ENCODE measurements at regions of chr3 and their contacts with region 1.

Region 1: GRCh38 chr3:14203521-14204079 is 25.0 kb downstream of the LSM3 start:
- DNase-seq: peak; percentile 77
- ATAC-seq: peak; percentile 77
- H3K4me3 ChIP-seq: no peak overlapping the region
- H3K27ac ChIP-seq: no peak overlapping the region
- H3K4me1 ChIP-seq: no peaks in the 10 kb centered on the region
- H3K27me3 ChIP-seq: no peaks in the 10 kb centered on the region
- CTCF ChIP-seq: peak; percentile 93

Region 2: DNA sequence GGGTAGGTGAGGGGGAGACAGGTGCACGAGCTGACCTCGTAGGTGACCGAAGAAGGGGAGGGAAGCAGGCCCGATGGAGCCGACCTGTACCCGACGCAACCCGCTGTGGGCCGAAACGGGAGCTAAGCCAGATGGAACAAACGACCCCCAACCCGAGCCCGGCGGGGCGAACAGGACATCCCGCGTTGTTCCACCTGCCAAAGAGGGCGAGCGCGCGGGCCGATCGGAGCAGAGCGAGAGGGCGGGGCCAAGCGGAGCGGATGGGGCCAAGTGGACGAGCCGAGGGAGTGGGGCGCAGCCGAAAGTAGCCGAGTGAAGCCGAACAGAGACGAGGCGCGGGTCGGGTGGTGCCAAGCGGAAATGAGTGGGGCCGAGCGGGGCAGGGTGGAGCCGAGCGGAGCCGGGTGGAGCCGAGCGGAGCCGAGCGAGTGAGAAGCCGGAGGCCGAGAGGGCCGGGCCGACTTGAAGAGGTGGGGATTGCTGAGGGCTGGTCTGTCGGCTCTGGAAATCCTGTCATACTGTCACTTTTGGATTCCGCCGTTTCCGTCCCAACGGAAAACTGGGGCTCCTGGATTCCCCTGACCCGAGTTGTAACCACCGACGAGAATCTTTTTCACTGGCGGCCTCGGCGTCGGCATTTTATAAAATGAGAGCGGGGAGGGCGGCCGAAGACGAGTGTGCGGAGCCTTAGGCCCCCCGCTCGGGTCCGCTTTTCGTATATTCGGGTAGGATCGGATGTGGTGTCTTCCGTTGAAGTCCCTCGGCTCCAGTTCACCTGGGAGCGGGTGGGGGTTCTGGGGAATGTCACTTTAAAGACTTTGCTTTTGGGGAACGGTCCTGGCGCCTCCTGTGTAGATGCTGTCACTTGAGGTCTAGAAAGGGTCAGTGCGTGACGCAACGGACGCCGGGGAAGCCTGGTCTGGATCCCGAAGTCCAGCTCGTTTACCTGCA is 308.2 kb before region 1 on chr3:
- CTCF ChIA-PET with region 1: interaction called, 13 read pairs
- POLR2A ChIA-PET with region 1: no interaction called
- intact Hi-C with region 1: loop called (anchors 2 kb)
- DNase-seq: peak; percentile 95
- ATAC-seq: peak; percentile 98
- H3K4me3 ChIP-seq: peak overlapping the region; percentile 79
- H3K27ac ChIP-seq: no peak overlapping the region
- H3K4me1 ChIP-seq: peaks cover 23% of the 10 kb centered on the region
- H3K27me3 ChIP-seq: no peaks in the 10 kb centered on the region
- CTCF ChIP-seq: no peak

Region 3: DNA sequence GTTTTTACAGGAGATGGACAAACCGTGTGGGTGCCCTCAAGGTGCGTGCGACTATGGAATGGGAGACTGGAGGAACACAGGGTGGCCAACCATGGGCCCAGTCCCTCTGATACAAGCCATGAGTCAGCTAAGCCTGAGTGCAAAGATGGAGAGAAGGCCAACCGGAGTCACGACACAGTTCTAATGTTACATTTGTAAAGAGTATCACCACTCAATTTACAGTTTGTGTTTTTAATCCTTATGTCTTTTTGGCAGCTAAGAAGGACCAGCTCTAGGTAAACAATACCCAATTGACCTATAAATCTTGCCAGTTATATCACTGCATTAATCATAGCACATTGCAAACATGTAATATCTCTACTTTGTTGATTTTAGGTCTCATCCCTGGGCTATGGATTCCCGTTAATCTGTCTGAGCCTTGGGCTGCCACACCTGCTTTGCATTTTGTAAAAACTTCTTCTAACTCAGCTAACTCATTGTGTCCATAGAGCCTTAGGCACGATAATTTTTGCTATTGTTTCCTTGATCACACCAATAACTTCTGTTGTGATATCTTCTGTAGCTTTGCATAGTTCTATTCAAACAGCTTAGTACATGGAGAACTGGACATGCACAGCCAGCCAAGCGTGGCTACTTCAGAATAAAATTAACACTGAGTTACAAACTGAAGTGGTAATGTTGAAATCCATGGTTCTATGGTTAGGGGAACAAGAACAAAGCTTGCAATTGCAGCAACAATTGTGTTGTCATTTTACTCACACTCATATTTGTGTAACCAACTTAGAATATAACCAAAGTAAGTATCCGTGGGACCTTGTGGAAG is 25.3 kb after region 1 on chr3:
- CTCF ChIA-PET with region 1: interaction called, 14 read pairs
- POLR2A ChIA-PET with region 1: no interaction called
- intact Hi-C with region 1: loop called (anchors 2 kb)
- DNase-seq: peak; percentile 88
- ATAC-seq: peak; percentile 71
- H3K4me3 ChIP-seq: peak overlapping the region; percentile 47
- H3K27ac ChIP-seq: peak overlapping the region; percentile 99
- H3K4me1 ChIP-seq: peaks cover 77% of the 10 kb centered on the region
- H3K27me3 ChIP-seq: no peaks in the 10 kb centered on the region
- CTCF ChIP-seq: no peak

Region 4: GRCh38 chr3:14297784-14298236 is 94.2 kb after region 1 on chr3:
- CTCF ChIA-PET with region 1: no interaction called
- POLR2A ChIA-PET with region 1: no interaction called
- intact Hi-C with region 1: no loop called
- DNase-seq: no peak
- ATAC-seq: no peak
- H3K4me3 ChIP-seq: no peak overlapping the region
- H3K27ac ChIP-seq: no peak overlapping the region
- H3K4me1 ChIP-seq: 0 out of 2 replicates have a peak, but pooled peaks cover 7% of the 10 kb centered on the region
- H3K27me3 ChIP-seq: peaks cover 19% of the 10 kb centered on the region
- CTCF ChIP-seq: no peak

Region 5: GRCh38 chr3:14371573-14372474 is 168.2 kb after region 1 on chr3:
- CTCF ChIA-PET with region 1: interaction called, 11 read pairs
- POLR2A ChIA-PET with region 1: no interaction called
- intact Hi-C with region 1: loop called (anchors 10 kb)
- DNase-seq: peak; percentile 95
- ATAC-seq: peak; percentile 83
- H3K4me3 ChIP-seq: no peak overlapping the region
- H3K27ac ChIP-seq: peak overlapping the region; percentile 40
- H3K4me1 ChIP-seq: peaks cover 34% of the 10 kb centered on the region
- H3K27me3 ChIP-seq: no peaks in the 10 kb centered on the region
- CTCF ChIP-seq: peak; percentile 38; the same call in 1 of the 2 replicates

Region 6: DNA sequence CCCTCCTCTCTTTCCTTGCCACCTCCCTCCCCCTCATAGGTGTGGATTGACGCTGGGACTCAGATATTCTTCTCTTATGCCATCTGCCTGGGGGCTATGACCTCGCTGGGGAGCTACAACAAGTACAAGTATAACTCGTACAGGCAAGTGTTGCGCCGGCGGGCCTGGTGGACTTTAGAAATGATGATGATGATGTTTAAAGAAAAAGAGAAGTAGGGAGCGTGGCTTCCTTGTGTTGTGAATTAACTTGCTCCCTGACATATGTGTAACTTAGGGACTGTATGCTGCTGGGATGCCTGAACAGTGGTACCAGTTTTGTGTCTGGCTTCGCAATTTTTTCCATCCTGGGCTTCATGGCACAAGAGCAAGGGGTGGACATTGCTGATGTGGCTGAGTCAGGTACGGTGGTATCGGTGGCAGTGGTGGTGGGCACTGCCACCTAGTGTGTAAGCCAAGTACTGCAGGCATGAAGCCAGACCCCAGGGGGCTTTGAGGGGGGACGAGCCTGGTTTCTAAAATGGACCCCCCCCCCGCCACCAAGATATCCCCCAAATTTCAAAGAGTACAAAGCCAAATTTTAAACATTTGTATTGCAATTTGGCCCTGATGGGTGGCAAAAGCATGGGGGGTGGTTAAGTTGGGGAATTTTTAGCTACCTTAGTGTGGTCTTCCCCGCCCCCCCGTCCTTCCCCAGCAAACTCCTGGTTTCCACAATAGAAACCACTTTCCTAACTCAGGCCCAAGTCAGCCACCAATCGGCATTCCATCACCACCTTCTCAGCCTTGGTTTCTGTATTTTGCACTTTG is 264.4 kb after region 1 on chr3:
- CTCF ChIA-PET with region 1: interaction called, 17 read pairs
- POLR2A ChIA-PET with region 1: interaction called, 3 read pairs
- intact Hi-C with region 1: loop called (anchors 1 kb)
- DNase-seq: peak; percentile 50
- ATAC-seq: peak; percentile 23
- H3K4me3 ChIP-seq: no peak overlapping the region
- H3K27ac ChIP-seq: no peak overlapping the region
- H3K4me1 ChIP-seq: peaks cover 14% of the 10 kb centered on the region
- H3K27me3 ChIP-seq: no peaks in the 10 kb centered on the region
- CTCF ChIP-seq: peak; percentile 90